Posterior vena cava (tissue), 2 donors: ENCODE measurements at regions of chr9 and their contacts with region 1.

Region 1: DNA sequence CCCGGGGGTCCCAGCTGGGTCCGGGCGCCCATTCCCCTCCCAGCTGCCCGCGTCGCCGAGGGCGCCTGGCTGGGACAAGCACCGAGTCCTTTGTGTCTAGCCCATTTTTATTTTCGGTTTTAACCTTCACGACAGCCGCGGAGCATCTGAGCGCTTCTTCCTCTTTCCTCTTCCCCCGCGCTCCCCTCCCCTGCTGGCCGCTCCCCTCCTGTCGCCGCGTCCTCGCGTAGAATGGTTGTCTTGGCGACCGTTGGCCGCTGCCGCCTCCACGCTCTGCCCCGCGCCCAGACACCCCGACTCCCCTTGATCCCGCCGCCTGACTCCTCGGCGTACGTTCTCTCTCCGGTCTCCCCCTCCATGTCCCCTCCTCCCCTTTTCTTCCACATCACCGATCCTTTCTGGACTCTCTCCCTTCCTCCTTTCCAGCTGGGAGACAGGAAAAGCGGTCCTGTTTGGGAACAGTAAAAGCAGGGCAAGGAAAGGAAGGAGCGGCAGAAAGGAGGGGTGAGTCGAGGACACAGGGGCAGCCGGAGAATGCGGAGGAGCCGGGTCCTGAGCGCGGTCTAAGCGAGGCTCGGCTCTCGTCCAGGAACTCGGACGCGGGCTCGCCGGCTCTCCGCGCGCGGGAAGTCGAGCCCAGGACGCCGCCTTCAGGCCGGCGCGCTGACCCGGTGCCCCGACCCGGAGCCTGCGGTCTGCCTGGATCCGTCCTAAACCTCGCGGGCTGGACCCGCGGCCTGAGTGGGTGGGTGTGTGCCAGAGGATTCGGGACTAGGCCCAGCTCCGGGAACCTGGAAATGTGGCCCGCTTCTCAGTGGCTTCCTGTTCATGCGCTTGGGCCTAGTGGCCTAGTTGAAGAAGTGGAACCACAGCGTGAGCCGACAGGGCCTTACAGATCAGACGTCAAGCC is 841 bp downstream of the CDKN2B-AS1 start:
- DNase-seq: peak; percentile 94

Region 2: GRCh38 chr9:21802195-21803000 is 193.0 kb before region 1 on chr9 and contains the start of gene MTAP:
- intact Hi-C with region 1: loop called in 1 of 2 experiments (anchors 10 kb)
- DNase-seq: peak; percentile 96
- total RNA-seq, gene MTAP: 28.1 to 33.0 TPM

Region 3: GRCh38 chr9:21812946-21813568 is 182.4 kb before region 1 on chr9:
- intact Hi-C with region 1: loop called (anchors 10 kb)
- DNase-seq: peak; percentile 91

Region 4: GRCh38 chr9:23290973-23291372 is 1295.5 kb after region 1 on chr9:
- intact Hi-C with region 1: no loop called
- DNase-seq: no peak